Endothelial cell of umbilical vein (primary cell): ENCODE measurements at regions of chr12 and their contacts with region 1.

Region 1: DNA sequence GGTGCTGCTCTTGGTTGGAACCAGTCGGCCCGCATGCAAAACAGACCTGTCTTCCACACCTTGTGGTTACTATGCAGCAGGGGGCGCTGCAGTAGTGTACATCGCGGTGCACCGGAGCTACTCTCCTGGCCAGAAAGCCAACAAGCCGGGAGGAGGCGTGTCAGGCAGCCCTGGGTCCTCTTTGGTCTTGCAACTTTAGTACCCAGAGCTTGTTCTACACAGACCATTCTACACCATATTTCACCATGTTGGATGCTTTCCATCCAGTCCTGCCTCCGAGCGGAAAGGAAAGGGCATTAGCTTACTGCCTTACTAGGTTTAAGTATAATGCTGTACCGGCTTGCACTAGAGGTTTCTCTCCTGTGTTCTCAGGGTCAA is 927 bp upstream of the TMTC2 start:
- DNase-seq: peak; percentile 93
- H3K4me3 ChIP-seq: peak overlapping the region; percentile 41 to 81 (median 77)
- H3K27ac ChIP-seq: no peak overlapping the region
- H3K4me1 ChIP-seq: peaks cover 14% of the 10 kb centered on the region
- H3K27me3 ChIP-seq: peaks cover 8 to 12% of the 10 kb centered on the region in 2 experiments
- CTCF ChIP-seq: peak; percentile 81 to 91
- POLR2A ChIP-seq: no peak

Region 2: DNA sequence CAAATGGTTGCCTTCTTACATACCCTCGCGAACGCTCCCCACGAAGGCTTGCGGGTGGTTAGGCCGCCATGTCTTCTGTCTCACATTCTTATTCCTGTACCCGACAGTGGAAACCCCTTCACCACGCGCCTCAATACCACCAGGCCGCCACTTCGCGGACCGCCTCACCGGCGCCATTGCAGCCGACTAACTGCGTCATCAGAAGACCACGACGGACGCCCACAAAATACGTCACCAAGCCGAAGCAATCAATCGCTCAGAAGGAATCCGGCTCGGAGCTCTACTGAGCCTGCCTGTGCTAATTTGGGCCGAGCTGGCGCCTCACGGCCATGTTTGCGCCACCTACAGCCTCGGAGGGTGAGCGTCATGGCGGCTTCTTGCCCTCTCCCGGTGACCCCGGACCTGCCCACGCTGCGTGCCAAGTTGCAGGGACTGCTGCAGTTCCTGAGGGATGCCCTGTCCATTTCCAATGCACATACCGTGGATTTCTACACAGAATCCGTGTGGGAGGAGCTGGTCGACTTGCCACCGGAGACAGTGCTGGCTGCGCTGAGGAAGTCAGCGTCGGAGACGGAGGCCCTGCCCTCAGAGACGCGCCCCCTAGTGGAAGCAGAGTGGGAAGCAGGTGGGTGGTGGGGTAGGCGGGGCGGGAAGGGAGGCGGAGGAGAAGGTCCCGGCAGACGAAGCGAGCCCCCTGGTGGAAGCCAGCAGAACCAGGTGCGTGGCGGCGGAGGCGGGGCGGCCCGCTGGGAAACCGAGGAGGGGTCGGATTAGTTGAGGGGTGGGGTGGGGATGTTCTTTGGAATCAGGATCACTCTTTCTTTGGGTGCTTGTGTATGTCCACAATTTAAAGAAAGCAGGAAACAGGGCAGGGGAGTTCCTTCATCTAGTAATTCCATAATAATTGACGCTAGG is 327.3 kb before region 1 on chr12 and contains the starts of genes CCDC59 and METTL25:
- CTCF ChIA-PET with region 1: interaction called, 16 read pairs
- POLR2A ChIA-PET with region 1: interaction called, 6 read pairs
- dilution Hi-C with region 1: no loop called
- intact Hi-C with region 1: no loop called
- DNase-seq: peak; percentile 98
- H3K4me3 ChIP-seq: peak within 1 kb of the TSS; percentile 65 to 99 (median 81)
- H3K27ac ChIP-seq: peak within 1 kb of the TSS; percentile 90
- H3K4me1 ChIP-seq: peaks cover 21% of the 10 kb centered on the region
- H3K27me3 ChIP-seq: no peaks in the 10 kb centered on the region
- CTCF ChIP-seq: peak; percentile 96 to 98
- POLR2A ChIP-seq: no peak
- total RNA-seq, gene CCDC59: 45.4 and 50.7 TPM in 2 replicates
- total RNA-seq, gene METTL25: 8.5 and 10.4 TPM in 2 replicates

Region 3: GRCh38 chr12:82593901-82594396 is 91.8 kb before region 1 on chr12:
- CTCF ChIA-PET with region 1: no interaction called
- POLR2A ChIA-PET with region 1: no interaction called
- dilution Hi-C with region 1: no loop called
- intact Hi-C with region 1: no loop called
- DNase-seq: no peak
- H3K4me3 ChIP-seq: no peak overlapping the region
- H3K27ac ChIP-seq: no peak overlapping the region
- H3K4me1 ChIP-seq: no peaks in the 10 kb centered on the region
- H3K27me3 ChIP-seq: peaks cover 0 to 1% of the 10 kb centered on the region in 2 experiments
- CTCF ChIP-seq: no peak
- POLR2A ChIP-seq: no peak

Region 4: GRCh38 chr12:82672811-82673495 is 12.8 kb before region 1 on chr12:
- CTCF ChIA-PET with region 1: interaction called, 31 read pairs
- POLR2A ChIA-PET with region 1: no interaction called
- dilution Hi-C with region 1: no loop called
- intact Hi-C with region 1: no loop called
- DNase-seq: no peak
- H3K4me3 ChIP-seq: no peak overlapping the region
- H3K27ac ChIP-seq: no peak overlapping the region
- H3K4me1 ChIP-seq: no peaks in the 10 kb centered on the region
- H3K27me3 ChIP-seq: no peaks in the 10 kb centered on the region
- CTCF ChIP-seq: no peak
- POLR2A ChIP-seq: no peak

Region 5: DNA sequence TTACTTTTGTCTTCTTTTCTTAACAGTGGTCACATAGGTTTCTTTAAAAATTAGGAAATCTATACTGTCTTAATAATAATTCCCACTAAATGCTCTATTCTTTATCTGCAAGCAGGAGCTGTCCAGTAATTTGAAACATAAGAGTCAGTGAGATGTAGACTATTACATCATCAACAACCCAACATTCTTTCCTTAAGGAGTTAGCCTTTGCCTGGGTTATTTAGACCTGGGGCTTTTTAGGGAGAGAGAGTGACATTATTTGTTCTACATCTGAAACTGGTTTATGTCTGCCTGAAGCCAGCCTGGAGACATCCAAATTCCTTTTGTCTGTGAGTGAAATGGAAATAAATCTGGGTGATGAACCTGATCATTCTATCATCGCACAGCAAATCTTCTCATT is 295.4 kb after region 1 on chr12:
- CTCF ChIA-PET with region 1: interaction called, 10 read pairs
- POLR2A ChIA-PET with region 1: no interaction called
- dilution Hi-C with region 1: no loop called
- intact Hi-C with region 1: no loop called
- DNase-seq: peak; percentile 15
- H3K4me3 ChIP-seq: no peak overlapping the region
- H3K27ac ChIP-seq: no peak overlapping the region
- H3K4me1 ChIP-seq: peaks cover 7% of the 10 kb centered on the region
- H3K27me3 ChIP-seq: no peaks in the 10 kb centered on the region
- CTCF ChIP-seq: no peak
- POLR2A ChIP-seq: no peak

Region 6: GRCh38 chr12:83102499-83102898 is 416.7 kb after region 1 on chr12:
- CTCF ChIA-PET with region 1: interaction called, 4 read pairs
- POLR2A ChIA-PET with region 1: no interaction called
- dilution Hi-C with region 1: no loop called
- intact Hi-C with region 1: loop called (anchors 5 kb)
- DNase-seq: peak; percentile 54
- H3K4me3 ChIP-seq: no peak overlapping the region
- H3K27ac ChIP-seq: peak overlapping the region; percentile 11
- H3K4me1 ChIP-seq: peaks cover 13% of the 10 kb centered on the region
- H3K27me3 ChIP-seq: no peaks in the 10 kb centered on the region
- CTCF ChIP-seq: no peak
- POLR2A ChIP-seq: no peak

Region 7: GRCh38 chr12:83954939-83955601 is 1269.3 kb after region 1 on chr12:
- CTCF ChIA-PET with region 1: interaction called, 3 read pairs
- POLR2A ChIA-PET with region 1: no interaction called
- dilution Hi-C with region 1: no loop called
- intact Hi-C with region 1: loop called (anchors 10 kb)
- DNase-seq: no peak
- H3K4me3 ChIP-seq: no peak overlapping the region
- H3K27ac ChIP-seq: no peak overlapping the region
- H3K4me1 ChIP-seq: no peaks in the 10 kb centered on the region
- H3K27me3 ChIP-seq: no peaks in the 10 kb centered on the region
- CTCF ChIP-seq: no peak
- POLR2A ChIP-seq: no peak

Region 8: DNA sequence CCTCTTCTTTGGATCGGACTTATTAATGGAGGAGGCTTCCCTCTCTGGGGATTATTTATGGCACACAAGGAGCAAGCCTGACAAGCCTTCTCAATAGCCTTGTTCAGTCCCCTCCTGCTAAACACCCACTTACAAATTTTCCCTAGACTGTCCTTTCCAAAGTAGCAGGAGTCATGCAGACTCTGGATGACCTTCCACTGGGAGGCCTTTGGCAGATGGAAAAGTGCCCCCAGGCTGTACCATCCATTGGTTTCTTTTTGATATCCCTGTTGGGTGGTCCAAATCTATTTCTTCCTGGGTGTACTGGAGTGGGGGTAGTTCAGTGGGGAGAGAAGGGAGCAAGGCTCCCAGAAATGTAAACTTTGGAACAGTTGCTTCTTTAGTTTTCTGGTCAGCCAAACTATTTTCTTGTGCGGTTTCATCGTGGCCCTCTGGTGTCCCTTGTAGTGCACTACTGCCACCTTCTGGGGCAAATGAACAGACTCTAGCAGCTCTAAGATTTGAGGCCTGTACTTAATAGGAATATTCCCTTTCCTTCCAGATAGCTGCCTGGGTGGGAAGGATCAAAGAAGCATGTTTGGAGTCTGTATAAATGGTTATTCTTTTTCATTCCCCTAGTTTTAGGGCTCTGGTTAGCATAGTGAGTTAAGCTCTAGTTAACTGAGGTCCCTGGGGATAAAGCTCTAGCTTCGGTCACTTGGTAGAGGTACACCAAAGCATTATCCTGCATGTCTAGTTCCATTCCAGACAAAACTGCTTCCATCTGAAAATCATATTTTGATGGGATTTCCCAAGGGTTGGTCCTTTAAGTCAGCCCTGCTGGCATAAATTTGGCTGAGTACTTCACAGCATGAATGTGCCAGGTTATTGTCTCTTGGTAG is 1817.4 kb after region 1 on chr12:
- CTCF ChIA-PET with region 1: interaction called, 86 read pairs
- POLR2A ChIA-PET with region 1: no interaction called
- dilution Hi-C with region 1: no loop called
- intact Hi-C with region 1: loop called (anchors 1 kb)
- DNase-seq: peak; percentile 45
- H3K4me3 ChIP-seq: no peak overlapping the region
- H3K27ac ChIP-seq: no peak overlapping the region
- H3K4me1 ChIP-seq: peaks cover 8% of the 10 kb centered on the region
- H3K27me3 ChIP-seq: no peaks in the 10 kb centered on the region
- CTCF ChIP-seq: peak; percentile 42 to 56
- POLR2A ChIP-seq: no peak